ENCODE measurements at regions of chr2 and their contacts with region 1.

Region 1: DNA sequence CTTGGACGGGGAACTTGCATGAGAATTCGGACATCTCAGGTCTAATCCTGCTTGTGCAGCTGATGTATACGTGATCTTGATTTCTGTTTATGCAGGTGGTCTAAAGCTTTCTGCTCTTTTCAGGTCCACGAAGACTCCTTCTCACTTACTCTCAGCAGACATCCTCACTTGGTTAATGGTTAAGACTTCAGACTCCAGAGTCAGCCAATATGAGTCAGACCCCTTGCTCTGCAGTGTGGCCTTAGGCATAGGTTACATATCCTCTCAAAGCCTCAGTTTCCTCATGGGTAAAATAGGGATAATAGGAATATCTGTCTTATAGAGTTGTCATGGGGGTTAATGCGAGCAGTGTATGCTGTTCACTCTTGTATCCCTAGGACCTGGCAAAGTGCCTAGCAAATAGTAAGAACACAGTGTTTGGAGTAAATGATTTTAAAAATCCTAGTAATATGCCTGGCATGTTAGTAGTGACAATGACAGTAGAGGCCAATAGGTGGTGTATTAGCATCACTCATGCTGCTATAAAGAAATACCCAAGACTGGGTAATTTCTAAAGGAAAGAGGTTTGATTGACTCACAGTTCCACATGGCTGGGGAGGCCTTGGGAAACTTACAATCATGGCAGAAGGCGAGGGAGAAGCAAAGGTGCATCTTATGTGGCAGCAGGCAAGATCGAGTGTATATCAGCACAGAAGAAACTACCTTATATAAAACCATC is 42.3 kb downstream of the XRCC5 start:
- DNase-seq: no peak
- H3K4me3 ChIP-seq: no peak overlapping the region
- H3K27ac ChIP-seq: no peak overlapping the region
- H3K4me1 ChIP-seq: no peaks in the 10 kb centered on the region
- H3K27me3 ChIP-seq: no peaks in the 10 kb centered on the region
- CTCF ChIP-seq: peak in 1 of 3 experiments; percentile 9; a peak in 1 of 4 replicates
- EP300 ChIP-seq: no peak
- POLR2A ChIP-seq: 0 out of 3 replicates have a peak, but pooled peaks of 1 of the 2 experiments have one; percentile 18
- RAD21 ChIP-seq: peak; percentile 12 to 18; a peak in 2 of 4 replicates

Region 2: DNA sequence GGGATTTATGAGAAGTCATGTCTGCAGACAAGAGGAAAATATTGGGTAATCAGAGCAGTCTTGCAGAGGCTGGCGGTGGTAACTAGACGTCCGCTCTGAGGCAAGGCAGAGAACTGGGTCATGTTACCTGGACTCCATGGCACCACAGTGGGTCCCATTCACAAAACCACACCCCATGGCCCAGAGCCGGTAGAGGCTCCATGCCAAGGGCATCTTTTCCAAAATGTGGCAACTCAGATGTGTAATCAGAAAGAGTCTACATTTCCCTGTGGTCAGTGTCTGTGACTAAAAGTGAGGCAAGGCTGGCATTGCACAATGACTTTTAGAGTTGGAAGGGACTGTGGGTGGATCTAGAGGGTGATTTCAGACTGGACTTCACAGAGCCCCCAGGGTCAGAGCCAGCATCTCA is 251.3 kb before region 1 on chr2:
- CTCF ChIA-PET with region 1: no interaction called
- POLR2A ChIA-PET with region 1: no interaction called
- DNase-seq: no peak
- H3K4me3 ChIP-seq: no peak overlapping the region
- H3K27ac ChIP-seq: no peak overlapping the region
- H3K4me1 ChIP-seq: no peaks in the 10 kb centered on the region
- H3K27me3 ChIP-seq: 0 out of 7 replicates have a peak, but pooled peaks cover 0 to 2% (median 0%) of the 10 kb centered on the region in 4 experiments
- CTCF ChIP-seq: no peak
- EP300 ChIP-seq: no peak
- POLR2A ChIP-seq: no peak
- RAD21 ChIP-seq: no peak

Region 3: GRCh38 chr2:216163518-216163917 is 12.0 kb after region 1 on chr2:
- CTCF ChIA-PET with region 1: interaction called, 8 read pairs
- POLR2A ChIA-PET with region 1: interaction called, 13 read pairs
- DNase-seq: no peak
- H3K4me3 ChIP-seq: no peak overlapping the region
- H3K27ac ChIP-seq: no peak overlapping the region
- H3K4me1 ChIP-seq: no peaks in the 10 kb centered on the region
- H3K27me3 ChIP-seq: no peaks in the 10 kb centered on the region
- CTCF ChIP-seq: no peak
- EP300 ChIP-seq: no peak
- POLR2A ChIP-seq: no peak
- RAD21 ChIP-seq: no peak

Region 4: DNA sequence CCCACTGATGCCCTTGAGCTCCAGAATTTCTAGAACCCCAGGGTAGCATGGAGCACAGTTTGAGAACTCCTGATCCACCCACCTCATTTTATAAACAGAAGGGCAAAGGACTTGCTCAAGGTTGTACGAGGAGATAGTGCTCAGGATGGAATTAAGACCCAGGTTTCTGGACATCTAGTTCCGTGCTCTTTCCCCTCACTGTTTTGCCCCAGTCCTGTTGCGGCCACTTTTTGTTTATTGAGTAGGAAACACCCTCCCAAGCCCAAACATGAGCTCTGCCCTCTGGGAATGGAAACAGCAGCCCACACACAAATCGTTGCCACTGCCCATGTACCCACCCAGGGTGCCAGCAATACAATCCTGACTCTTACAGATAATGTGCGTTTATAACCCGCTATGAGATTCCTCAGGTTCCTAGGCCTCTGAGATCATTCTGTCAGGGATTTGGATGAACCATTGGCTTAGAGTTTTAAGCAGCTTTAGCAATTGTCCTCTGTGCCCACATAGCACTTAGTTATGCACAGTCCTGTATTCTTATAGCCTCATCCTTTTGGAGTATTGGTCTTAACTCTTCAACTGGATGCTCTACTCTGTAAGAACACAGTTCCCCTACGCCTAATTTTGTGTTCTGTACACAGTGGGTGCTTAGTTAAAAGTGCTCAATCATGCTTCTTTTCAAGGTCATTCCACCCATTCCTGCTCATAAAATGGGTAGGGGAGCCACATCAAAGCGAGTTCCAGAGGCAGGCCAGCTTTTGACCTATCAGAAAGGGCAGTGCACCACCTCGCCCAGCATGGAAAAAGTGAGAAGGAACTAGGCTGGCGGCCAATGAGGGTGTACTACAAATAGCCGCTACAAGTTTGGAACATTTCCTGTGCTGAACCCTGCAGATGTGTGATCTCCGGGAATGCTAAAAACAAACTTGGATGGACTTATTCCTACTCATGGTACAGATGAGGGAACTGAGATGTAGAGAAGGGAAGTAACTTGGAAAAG is 421.4 kb after region 1 on chr2:
- CTCF ChIA-PET with region 1: no interaction called
- POLR2A ChIA-PET with region 1: no interaction called
- DNase-seq: no peak
- H3K4me3 ChIP-seq: no peak overlapping the region
- H3K27ac ChIP-seq: no peak overlapping the region
- H3K4me1 ChIP-seq: peaks cover 0 to 5% (median 1%) of the 10 kb centered on the region in 4 experiments; a peak in 3 of 7 replicates
- H3K27me3 ChIP-seq: no peaks in the 10 kb centered on the region; a peak in 1 of 7 replicates
- CTCF ChIP-seq: no peak
- EP300 ChIP-seq: no peak
- POLR2A ChIP-seq: no peak
- RAD21 ChIP-seq: no peak